Left cardiac atrium (tissue), 4 donors: ENCODE measurements at regions of chr5 and their contacts with region 1.

Region 1: GRCh38 chr5:157858527-157859226 is at the start of gene CLINT1:
- DNase-seq: peak; percentile 96
- ATAC-seq: peak; percentile 97 to 98
- total RNA-seq, gene CLINT1: 54.0 to 72.8 TPM

Region 2: DNA sequence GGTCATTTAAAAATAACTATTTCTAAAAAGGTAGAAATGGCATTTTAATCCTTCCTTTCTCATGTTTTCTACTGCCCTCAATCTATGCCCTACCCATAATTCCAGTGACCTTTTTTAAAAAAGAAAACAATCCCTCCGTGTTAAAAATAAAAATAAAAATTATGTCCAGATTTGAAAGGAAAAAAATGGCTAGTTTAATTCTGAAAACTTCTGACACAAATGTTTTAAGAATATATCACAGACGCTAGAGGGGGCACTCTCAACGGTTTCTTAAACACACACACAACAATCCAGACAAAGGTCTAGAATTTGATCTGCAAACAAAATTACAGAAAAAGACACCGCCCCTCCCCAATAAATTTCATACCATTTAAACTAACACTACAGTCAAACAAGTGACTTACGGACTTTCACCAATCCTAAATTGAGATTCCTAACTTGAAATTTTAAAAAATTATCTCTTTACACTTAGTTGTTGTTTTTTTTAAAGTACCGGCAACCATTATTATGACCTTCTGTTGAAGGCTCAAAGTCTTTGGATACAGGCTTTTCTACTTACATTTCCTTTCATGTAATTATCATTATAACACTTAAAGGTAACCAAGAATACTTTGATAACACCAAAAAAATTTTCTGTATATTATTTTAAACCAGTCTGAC is 38.0 kb before region 1 on chr5:
- intact Hi-C with region 1: loop called in 1 of 2 experiments (anchors 5 kb)
- DNase-seq: no peak
- ATAC-seq: no peak

Region 3: GRCh38 chr5:157917899-157918809 is 59.5 kb after region 1 on chr5:
- intact Hi-C with region 1: loop called in 1 of 2 experiments (anchors 1 kb)
- DNase-seq: peak; percentile 76
- ATAC-seq: peak; percentile 27 to 69

Region 4: GRCh38 chr5:157948738-157949410 is 90.2 kb after region 1 on chr5:
- intact Hi-C with region 1: loop called in 1 of 2 experiments (anchors 2 kb)
- DNase-seq: peak; percentile 89
- ATAC-seq: peak; percentile 99 to 100

Region 5: GRCh38 chr5:157994906-157995519 is 136.3 kb after region 1 on chr5:
- intact Hi-C with region 1: loop called in 1 of 2 experiments (anchors 10 kb)
- DNase-seq: peak; percentile 76
- ATAC-seq: peak; percentile 97